ENCODE measurements at regions of chr5 and their contacts with region 1.

Region 1: GRCh38 chr5:80864706-80865435 is 95.3 kb upstream of the RASGRF2 start:
- DNase-seq: no peak
- H3K4me3 ChIP-seq: no peak overlapping the region
- H3K27ac ChIP-seq: no peak overlapping the region
- H3K4me1 ChIP-seq: no peaks in the 10 kb centered on the region
- H3K27me3 ChIP-seq: no peaks in the 10 kb centered on the region
- CTCF ChIP-seq: no peak
- POLR2A ChIP-seq: no peak

Region 2: GRCh38 chr5:81315336-81315735 is 450.5 kb after region 1 on chr5:
- intact Hi-C with region 1: no loop called
- DNase-seq: no peak
- H3K4me3 ChIP-seq: no peak overlapping the region
- H3K27ac ChIP-seq: no peak overlapping the region
- H3K4me1 ChIP-seq: no peaks in the 10 kb centered on the region
- H3K27me3 ChIP-seq: no peaks in the 10 kb centered on the region
- CTCF ChIP-seq: no peak
- POLR2A ChIP-seq: no peak

Region 3: DNA sequence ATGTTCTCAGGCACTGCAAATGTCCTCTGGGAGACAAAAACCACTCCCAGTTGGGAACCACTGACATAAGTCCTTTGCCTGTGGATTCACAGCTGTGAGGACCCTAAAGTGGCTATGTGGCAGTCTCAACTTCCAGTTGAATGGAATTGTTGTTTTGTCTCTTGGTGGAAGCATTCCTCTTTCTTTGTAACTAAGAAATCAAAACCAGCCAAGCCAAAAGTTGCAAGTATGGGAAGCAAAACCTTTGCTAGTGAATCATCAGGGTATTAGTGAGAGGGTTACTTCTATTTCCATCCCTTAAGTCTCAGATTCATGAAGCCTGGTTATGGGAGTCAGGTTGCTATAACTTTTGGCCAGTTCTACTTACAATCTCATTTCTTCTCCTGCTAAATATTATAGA is 1463.1 kb after region 1 on chr5:
- intact Hi-C with region 1: loop called (anchors 5 kb)
- DNase-seq: no peak
- H3K4me3 ChIP-seq: no peak overlapping the region
- H3K27ac ChIP-seq: no peak overlapping the region
- H3K4me1 ChIP-seq: no peaks in the 10 kb centered on the region
- H3K27me3 ChIP-seq: no peaks in the 10 kb centered on the region
- CTCF ChIP-seq: no peak
- POLR2A ChIP-seq: no peak